ENCODE measurements at regions of chr20 and their contacts with region 1.

Region 1: GRCh38 chr20:52972190-52972937 is at the start of gene TSHZ2:
- DNase-seq: peak; percentile 27 to 75 (median 58)
- ATAC-seq: peak; percentile 66
- H3K4me3 ChIP-seq: peak within 1 kb of the TSS; percentile 65
- H3K4me3 Mint-ChIP-seq: peak within 1 kb of the TSS; percentile 90 to 100 (median 96)
- H3K27ac ChIP-seq: peak within 1 kb of the TSS; percentile 97
- H3K27ac Mint-ChIP-seq: peak within 1 kb of the TSS; percentile 93 to 97 (median 95)
- H3K4me1 ChIP-seq: peaks cover 0 to 12% of the 10 kb centered on the region in 2 donors
- H3K4me1 Mint-ChIP-seq: peaks cover 12 to 45% (median 38%) of the 10 kb centered on the region in 7 donors
- H3K27me3 ChIP-seq: peaks cover 0 to 3% of the 10 kb centered on the region in 2 donors
- H3K27me3 Mint-ChIP-seq: peaks cover 0 to 32% (median 7%) of the 10 kb centered on the region in 5 donors
- total RNA-seq, gene TSHZ2: 21.0 to 84.5 (median 59.2) TPM

Region 2: GRCh38 chr20:52305858-52306257 is 666.5 kb before region 1 on chr20:
- CTCF ChIA-PET with region 1: no interaction called
- POLR2A ChIA-PET with region 1: interaction called, 4 read pairs
- intact Hi-C with region 1: loop called (anchors 2 to 5 kb)
- DNase-seq: peak in 7 of 9 donors; percentile 18 to 70 (median 52)
- ATAC-seq: peak; percentile 87
- H3K4me3 ChIP-seq: no peak overlapping the region
- H3K4me3 Mint-ChIP-seq: peak overlapping the region; percentile 2 to 76 (median 58)
- H3K27ac ChIP-seq: peak overlapping the region; percentile 43
- H3K27ac Mint-ChIP-seq: peak overlapping the region; percentile 60 to 93 (median 86)
- H3K4me1 ChIP-seq: peaks cover 0 to 27% of the 10 kb centered on the region in 2 donors
- H3K4me1 Mint-ChIP-seq: peaks cover 16 to 77% (median 60%) of the 10 kb centered on the region in 7 donors
- H3K27me3 ChIP-seq: no peaks in the 10 kb centered on the region
- H3K27me3 Mint-ChIP-seq: peaks cover 0 to 2% (median 0%) of the 10 kb centered on the region in 5 donors

Region 3: GRCh38 chr20:52410182-52410647 is 562.1 kb before region 1 on chr20:
- CTCF ChIA-PET with region 1: interaction called, 3 read pairs
- POLR2A ChIA-PET with region 1: interaction called, 28 read pairs
- intact Hi-C with region 1: loop called (anchors 1 to 2 kb)
- DNase-seq: peak in 8 of 9 donors; percentile 18 to 93 (median 87)
- ATAC-seq: peak; percentile 94
- H3K4me3 ChIP-seq: peak overlapping the region; percentile 30
- H3K4me3 Mint-ChIP-seq: peak overlapping the region; percentile 63 to 87 (median 82)
- H3K27ac ChIP-seq: peak overlapping the region; percentile 94
- H3K27ac Mint-ChIP-seq: peak overlapping the region; percentile 94 to 100 (median 99)
- H3K4me1 ChIP-seq: peaks cover 68 to 73% of the 10 kb centered on the region in 2 donors
- H3K4me1 Mint-ChIP-seq: peaks cover 34 to 88% (median 76%) of the 10 kb centered on the region in 7 donors
- H3K27me3 ChIP-seq: no peaks in the 10 kb centered on the region
- H3K27me3 Mint-ChIP-seq: no peaks in the 10 kb centered on the region

Region 4: DNA sequence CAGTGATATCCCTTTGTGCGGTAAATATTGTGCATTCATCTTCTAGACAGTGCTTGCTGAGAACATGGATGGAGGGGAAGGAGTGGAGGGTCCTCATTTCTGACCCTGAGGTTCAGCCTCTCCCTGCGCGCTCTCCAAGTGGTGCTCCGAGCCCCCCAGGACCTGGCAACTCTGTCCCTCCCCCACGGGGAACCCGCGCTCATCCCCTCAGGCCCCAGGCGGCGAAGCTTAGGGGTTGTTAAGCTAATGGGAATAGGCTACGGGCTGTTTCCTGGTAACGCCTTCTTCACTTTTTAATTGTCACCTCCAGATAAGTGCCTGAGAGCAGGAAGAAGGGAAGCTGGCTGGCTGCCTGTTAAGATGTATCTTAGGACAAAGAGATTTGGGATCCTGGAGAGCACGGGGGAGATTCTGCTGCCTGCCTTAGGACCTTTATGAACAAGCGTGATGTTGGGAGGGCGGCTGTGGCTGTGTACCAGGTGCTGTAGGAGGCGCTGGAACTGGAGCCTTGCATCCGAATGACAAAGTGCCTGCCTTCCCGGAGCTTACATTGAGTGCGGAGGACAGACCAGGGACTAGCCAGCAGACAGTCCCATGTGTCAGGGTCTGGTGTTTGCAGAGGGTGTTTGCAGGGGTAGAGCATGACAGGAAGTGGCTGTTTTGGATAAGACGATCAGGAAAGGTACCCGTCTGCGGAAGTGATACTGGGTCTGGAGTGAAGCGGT is 11.5 kb after region 1 on chr20:
- CTCF ChIA-PET with region 1: interaction called, 4 read pairs
- POLR2A ChIA-PET with region 1: interaction called, 22 read pairs
- intact Hi-C with region 1: loop called in 1 of 2 experiments (anchors 1 kb)
- DNase-seq: peak in 1 of 9 donors; percentile 14
- ATAC-seq: peak; percentile 59
- H3K4me3 ChIP-seq: peak overlapping the region; percentile 23
- H3K4me3 Mint-ChIP-seq: peak overlapping the region; percentile 79 to 90 (median 84)
- H3K27ac ChIP-seq: peak overlapping the region; percentile 39
- H3K27ac Mint-ChIP-seq: peak overlapping the region; percentile 79 to 97 (median 87)
- H3K4me1 ChIP-seq: peaks cover 0 to 31% of the 10 kb centered on the region in 2 donors
- H3K4me1 Mint-ChIP-seq: peaks cover 35 to 92% (median 77%) of the 10 kb centered on the region in 7 donors
- H3K27me3 ChIP-seq: no peaks in the 10 kb centered on the region
- H3K27me3 Mint-ChIP-seq: peaks cover 0 to 10% (median 0%) of the 10 kb centered on the region in 5 donors

Region 5: DNA sequence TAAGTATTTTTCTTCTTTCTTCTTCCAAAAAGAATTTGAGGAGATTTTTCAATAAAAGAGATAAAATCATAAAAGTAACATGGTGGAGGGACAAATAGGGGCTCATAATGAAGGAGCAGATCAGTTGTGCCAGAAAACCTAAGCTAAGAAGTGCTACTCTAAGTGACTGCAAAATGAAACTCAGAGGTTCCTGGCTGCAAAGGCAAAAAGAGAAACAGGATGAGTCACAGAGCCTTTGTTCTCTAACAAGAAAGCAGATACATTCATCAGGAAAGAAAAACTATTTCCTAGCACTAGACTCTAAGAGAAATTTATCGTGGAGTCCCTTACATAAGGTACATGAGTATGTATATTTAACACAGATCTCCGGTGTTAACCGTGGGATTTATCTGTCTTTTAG is 49.6 kb after region 1 on chr20:
- CTCF ChIA-PET with region 1: interaction called, 3 read pairs
- POLR2A ChIA-PET with region 1: interaction called, 4 read pairs
- intact Hi-C with region 1: loop called in 1 of 2 experiments (anchors 2 kb)
- DNase-seq: peak in 2 of 9 donors; percentile 21 to 27
- ATAC-seq: peak; percentile 46
- H3K4me3 ChIP-seq: no peak overlapping the region
- H3K4me3 Mint-ChIP-seq: peak overlapping the region in 7 of 10 donors; percentile 14 to 73 (median 57)
- H3K27ac ChIP-seq: no peak overlapping the region
- H3K27ac Mint-ChIP-seq: peak overlapping the region; percentile 39 to 96 (median 67)
- H3K4me1 ChIP-seq: peaks cover 0 to 16% of the 10 kb centered on the region in 2 donors
- H3K4me1 Mint-ChIP-seq: peaks cover 23 to 76% (median 62%) of the 10 kb centered on the region in 7 donors
- H3K27me3 ChIP-seq: no peaks in the 10 kb centered on the region
- H3K27me3 Mint-ChIP-seq: no peaks in the 10 kb centered on the region

Region 6: DNA sequence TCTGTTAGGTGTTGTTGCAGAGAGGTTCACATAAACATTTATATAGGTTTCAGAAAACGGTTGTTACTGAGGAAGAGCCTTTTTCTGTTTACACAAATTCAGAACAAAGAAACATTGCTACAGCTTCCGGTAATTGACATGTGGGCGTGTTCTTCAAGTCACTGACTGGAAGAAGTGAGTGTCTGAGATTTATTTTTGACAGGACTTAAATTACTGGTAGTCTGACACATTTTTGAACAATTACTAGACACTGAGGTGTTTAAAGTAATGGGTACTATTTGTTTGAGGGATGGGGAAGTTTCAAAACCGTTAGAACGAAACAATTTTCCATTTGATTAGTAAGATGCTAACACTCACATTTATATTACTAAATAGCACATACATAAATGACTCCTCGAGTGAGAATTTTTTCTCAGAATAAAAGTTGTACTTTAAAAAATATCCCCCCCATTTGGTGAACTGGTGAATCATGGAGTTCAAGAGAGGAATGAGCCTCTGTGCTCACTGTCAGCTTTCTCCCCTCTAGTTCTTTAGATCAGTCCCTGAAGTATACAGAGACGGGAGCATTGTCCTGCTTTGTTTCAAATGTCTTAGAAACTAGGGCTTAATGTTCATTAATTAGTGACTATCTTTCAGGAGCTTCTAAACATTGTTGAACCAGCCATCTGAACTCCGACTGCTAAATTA is 98.5 kb after region 1 on chr20:
- CTCF ChIA-PET with region 1: no interaction called
- POLR2A ChIA-PET with region 1: no interaction called
- intact Hi-C with region 1: loop called in 1 of 2 experiments (anchors 2 kb)
- DNase-seq: peak in 4 of 9 donors; percentile 18 to 40 (median 37)
- ATAC-seq: peak; percentile 54
- H3K4me3 ChIP-seq: no peak overlapping the region
- H3K4me3 Mint-ChIP-seq: peak overlapping the region in 7 of 10 donors; percentile 9 to 61 (median 24)
- H3K27ac ChIP-seq: peak overlapping the region; percentile 4
- H3K27ac Mint-ChIP-seq: peak overlapping the region; percentile 44 to 94 (median 73)
- H3K4me1 ChIP-seq: peaks cover 0 to 13% of the 10 kb centered on the region in 2 donors
- H3K4me1 Mint-ChIP-seq: peaks cover 22 to 52% (median 44%) of the 10 kb centered on the region in 7 donors
- H3K27me3 ChIP-seq: no peaks in the 10 kb centered on the region
- H3K27me3 Mint-ChIP-seq: peaks cover 0 to 9% (median 0%) of the 10 kb centered on the region in 5 donors

Region 7: DNA sequence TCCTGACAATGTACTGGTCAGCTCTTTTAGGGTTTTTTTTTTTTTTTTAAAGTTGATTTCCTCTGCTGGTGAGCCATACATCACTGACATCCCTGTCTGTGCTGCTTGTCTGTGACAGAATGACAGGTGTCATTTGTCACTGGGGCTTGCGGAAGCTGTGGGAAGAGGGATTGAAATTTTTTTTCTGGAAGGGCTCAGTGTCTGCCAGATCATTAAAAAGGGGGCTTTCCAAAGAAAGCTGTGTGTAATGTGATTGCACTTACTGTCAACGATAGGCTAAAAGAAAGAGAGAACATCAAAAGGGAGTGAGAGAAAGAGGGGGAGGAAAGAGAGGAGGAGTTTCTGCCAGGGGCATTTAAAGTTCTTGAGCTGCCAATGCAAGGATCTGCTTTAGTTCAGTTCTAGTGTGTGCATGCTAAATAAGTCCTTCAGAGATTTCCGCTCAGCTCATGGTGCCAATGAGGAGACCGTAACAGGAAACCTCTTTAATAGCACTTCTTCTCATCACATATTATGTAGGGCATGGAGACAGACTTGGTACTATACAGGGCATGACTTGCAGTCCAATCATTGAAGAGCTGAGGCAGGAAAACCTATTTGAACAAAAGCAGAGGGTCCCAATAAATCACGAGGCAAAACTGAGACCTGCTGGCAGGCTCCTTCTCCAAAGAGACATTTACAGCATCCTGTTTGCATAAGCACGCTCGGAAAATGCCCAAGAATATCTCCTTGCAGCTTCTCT is 177.0 kb after region 1 on chr20:
- CTCF ChIA-PET with region 1: no interaction called
- POLR2A ChIA-PET with region 1: no interaction called
- intact Hi-C with region 1: loop called in 1 of 2 experiments (anchors 5 kb)
- DNase-seq: peak in 4 of 9 donors; percentile 2 to 11 (median 6)
- ATAC-seq: peak; percentile 32
- H3K4me3 ChIP-seq: no peak overlapping the region
- H3K4me3 Mint-ChIP-seq: peak overlapping the region in 8 of 10 donors; percentile 12 to 56 (median 35)
- H3K27ac ChIP-seq: no peak overlapping the region
- H3K27ac Mint-ChIP-seq: peak overlapping the region in 3 of 9 donors; percentile 7 to 84 (median 72)
- H3K4me1 ChIP-seq: peaks cover 0 to 13% of the 10 kb centered on the region in 2 donors
- H3K4me1 Mint-ChIP-seq: peaks cover 22 to 65% (median 56%) of the 10 kb centered on the region in 7 donors
- H3K27me3 ChIP-seq: no peaks in the 10 kb centered on the region
- H3K27me3 Mint-ChIP-seq: no peaks in the 10 kb centered on the region